A673 (cell line): ENCODE measurements at regions of chr16 and their contacts with region 1.

Region 1: DNA sequence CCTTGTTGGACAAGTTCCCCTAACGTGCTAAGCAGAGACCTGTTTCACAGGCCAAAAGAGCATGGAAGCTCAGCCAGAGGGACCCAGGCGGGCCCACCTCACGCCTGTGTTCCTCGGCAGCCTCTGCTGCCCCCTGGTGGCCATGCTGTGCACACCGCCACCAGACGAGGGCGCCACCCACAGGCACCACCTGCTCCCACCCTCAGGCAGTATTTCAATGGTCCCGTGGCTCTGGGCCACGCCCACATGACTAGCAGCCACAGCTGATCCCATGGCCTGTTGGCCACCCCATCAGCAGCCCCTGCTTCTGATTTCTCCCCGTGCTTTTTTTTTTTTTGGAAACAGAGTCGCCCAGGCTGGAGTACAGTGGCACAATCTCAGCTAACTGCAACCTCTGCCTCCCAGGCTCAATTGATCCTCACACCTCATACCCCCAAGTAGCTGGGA is 18.9 kb downstream of the MPG start:
- DNase-seq: peak; percentile 92
- H3K4me3 ChIP-seq: no peak overlapping the region
- H3K27ac ChIP-seq: no peak overlapping the region
- H3K4me1 ChIP-seq: peaks cover 7% of the 10 kb centered on the region
- H3K27me3 ChIP-seq: no peaks in the 10 kb centered on the region
- CTCF ChIP-seq: peak; percentile 100

Region 2: GRCh38 chr16:450385-451134 is 353.6 kb after region 1 on chr16:
- CTCF ChIA-PET with region 1: no interaction called
- POLR2A ChIA-PET with region 1: no interaction called
- intact Hi-C with region 1: no loop called
- DNase-seq: no peak
- H3K4me3 ChIP-seq: no peak overlapping the region
- H3K27ac ChIP-seq: no peak overlapping the region
- H3K4me1 ChIP-seq: peaks cover 5% of the 10 kb centered on the region
- H3K27me3 ChIP-seq: no peaks in the 10 kb centered on the region
- CTCF ChIP-seq: no peak

Region 3: GRCh38 chr16:995087-995486 is 898.1 kb after region 1 on chr16:
- CTCF ChIA-PET with region 1: no interaction called
- POLR2A ChIA-PET with region 1: interaction called, 11 read pairs
- intact Hi-C with region 1: no loop called
- DNase-seq: no peak
- H3K4me3 ChIP-seq: no peak overlapping the region
- H3K27ac ChIP-seq: no peak overlapping the region
- H3K4me1 ChIP-seq: peaks cover 25% of the 10 kb centered on the region
- H3K27me3 ChIP-seq: no peaks in the 10 kb centered on the region
- CTCF ChIP-seq: no peak